CD4-positive, alpha-beta memory T cell (primary cell): ENCODE measurements at regions of chr6 and their contacts with region 1.

Region 1: GRCh38 chr6:14144678-14145113 is 27.1 kb downstream of the CD83 start:
- DNase-seq: peak; percentile 59 to 69 (median 64)
- H3K4me3 ChIP-seq: no peak overlapping the region
- H3K4me3 Mint-ChIP-seq: no peak overlapping the region
- H3K27ac ChIP-seq: no peak overlapping the region
- H3K27ac Mint-ChIP-seq: no peak overlapping the region
- H3K4me1 ChIP-seq: no peaks in the 10 kb centered on the region
- H3K4me1 Mint-ChIP-seq: peaks cover 0 to 5% (median under 1%) of the 10 kb centered on the region in 4 donors
- H3K27me3 ChIP-seq: no peaks in the 10 kb centered on the region
- H3K27me3 Mint-ChIP-seq: no peaks in the 10 kb centered on the region

Region 2: GRCh38 chr6:13795041-13795750 is 349.5 kb before region 1 on chr6:
- CTCF ChIA-PET with region 1: interaction called, 3 read pairs
- POLR2A ChIA-PET with region 1: no interaction called
- intact Hi-C with region 1: loop called (anchors 1 kb)
- DNase-seq: peak; percentile 73 to 77 (median 75)
- H3K4me3 ChIP-seq: no peak overlapping the region
- H3K4me3 Mint-ChIP-seq: no peak overlapping the region
- H3K27ac ChIP-seq: no peak overlapping the region
- H3K27ac Mint-ChIP-seq: peak overlapping the region in 3 of 7 donors; percentile 7 to 32 (median 7)
- H3K4me1 ChIP-seq: no peaks in the 10 kb centered on the region
- H3K4me1 Mint-ChIP-seq: peaks cover 0 to 3% (median under 1%) of the 10 kb centered on the region in 4 donors
- H3K27me3 ChIP-seq: no peaks in the 10 kb centered on the region
- H3K27me3 Mint-ChIP-seq: no peaks in the 10 kb centered on the region

Region 3: GRCh38 chr6:13908955-13909381 is 235.7 kb before region 1 on chr6:
- CTCF ChIA-PET with region 1: interaction called, 66 read pairs
- POLR2A ChIA-PET with region 1: no interaction called
- intact Hi-C with region 1: no loop called
- DNase-seq: peak; percentile 57 to 71 (median 67)
- H3K4me3 ChIP-seq: no peak overlapping the region
- H3K4me3 Mint-ChIP-seq: no peak overlapping the region
- H3K27ac ChIP-seq: no peak overlapping the region
- H3K27ac Mint-ChIP-seq: no peak overlapping the region
- H3K4me1 ChIP-seq: peaks cover 4% of the 10 kb centered on the region
- H3K4me1 Mint-ChIP-seq: peaks cover 0 to 6% (median 4%) of the 10 kb centered on the region in 4 donors
- H3K27me3 ChIP-seq: no peaks in the 10 kb centered on the region
- H3K27me3 Mint-ChIP-seq: peaks cover 18 to 21% of the 10 kb centered on the region in 2 donors

Region 4: GRCh38 chr6:14046476-14047068 is 98.1 kb before region 1 on chr6:
- CTCF ChIA-PET with region 1: interaction called, 12 read pairs
- POLR2A ChIA-PET with region 1: no interaction called
- intact Hi-C with region 1: loop called (anchors 5 kb)
- DNase-seq: peak; percentile 30 to 44 (median 37)
- H3K4me3 ChIP-seq: no peak overlapping the region
- H3K4me3 Mint-ChIP-seq: no peak overlapping the region
- H3K27ac ChIP-seq: no peak overlapping the region
- H3K27ac Mint-ChIP-seq: no peak overlapping the region
- H3K4me1 ChIP-seq: no peaks in the 10 kb centered on the region
- H3K4me1 Mint-ChIP-seq: peaks cover 0 to 1% (median 0%) of the 10 kb centered on the region in 4 donors
- H3K27me3 ChIP-seq: no peaks in the 10 kb centered on the region
- H3K27me3 Mint-ChIP-seq: peaks cover 19 to 26% of the 10 kb centered on the region in 2 donors

Region 5: GRCh38 chr6:14159090-14159489 is 14.4 kb after region 1 on chr6:
- CTCF ChIA-PET with region 1: interaction called, 12 read pairs
- POLR2A ChIA-PET with region 1: no interaction called
- intact Hi-C with region 1: no loop called
- DNase-seq: no peak
- H3K4me3 ChIP-seq: no peak overlapping the region
- H3K4me3 Mint-ChIP-seq: no peak overlapping the region
- H3K27ac ChIP-seq: no peak overlapping the region
- H3K27ac Mint-ChIP-seq: no peak overlapping the region
- H3K4me1 ChIP-seq: no peaks in the 10 kb centered on the region
- H3K4me1 Mint-ChIP-seq: no peaks in the 10 kb centered on the region
- H3K27me3 ChIP-seq: no peaks in the 10 kb centered on the region
- H3K27me3 Mint-ChIP-seq: peaks cover 3 to 4% of the 10 kb centered on the region in 2 donors

Region 6: DNA sequence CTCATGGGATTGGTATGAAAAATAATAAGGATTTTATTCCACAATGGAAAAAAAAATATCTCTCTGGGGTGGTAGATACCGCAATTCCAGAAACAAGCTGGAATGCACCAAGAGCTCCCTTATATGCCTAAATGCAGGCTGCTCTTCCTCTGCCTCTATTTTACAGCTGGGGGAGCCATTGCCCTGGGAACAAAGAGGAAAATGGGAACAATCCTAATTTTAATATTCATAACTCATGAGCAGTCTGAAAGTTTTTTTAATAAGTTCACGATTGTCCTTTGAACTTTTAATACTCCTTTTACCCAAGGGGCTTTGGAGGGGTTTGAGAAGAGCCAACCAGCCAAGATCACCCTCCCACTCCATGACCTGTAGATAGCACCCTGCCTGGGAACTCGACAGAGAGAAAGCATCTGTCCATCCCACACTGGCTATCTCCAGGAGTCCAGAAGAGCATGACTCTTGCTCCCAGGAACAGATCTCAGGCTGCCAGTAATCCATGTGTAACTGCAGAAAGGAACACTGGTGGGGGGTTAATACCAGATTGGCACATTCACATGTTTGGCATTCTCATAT is 47.6 kb after region 1 on chr6:
- CTCF ChIA-PET with region 1: no interaction called
- POLR2A ChIA-PET with region 1: no interaction called
- intact Hi-C with region 1: no loop called
- DNase-seq: no peak
- H3K4me3 ChIP-seq: no peak overlapping the region
- H3K4me3 Mint-ChIP-seq: no peak overlapping the region
- H3K27ac ChIP-seq: no peak overlapping the region
- H3K27ac Mint-ChIP-seq: no peak overlapping the region
- H3K4me1 ChIP-seq: no peaks in the 10 kb centered on the region
- H3K4me1 Mint-ChIP-seq: no peaks in the 10 kb centered on the region
- H3K27me3 ChIP-seq: no peaks in the 10 kb centered on the region
- H3K27me3 Mint-ChIP-seq: peaks cover 4 to 8% of the 10 kb centered on the region in 2 donors